ENCODE measurements at regions of chr13 and their contacts with region 1.

Region 1: GRCh38 chr13:106083620-106084350 is 451.7 kb downstream of the EFNB2 start:
- DNase-seq: no peak
- H3K4me3 ChIP-seq: no peak overlapping the region
- H3K27ac ChIP-seq: no peak overlapping the region
- H3K4me1 ChIP-seq: peaks cover 0 to 4% (median 0%) of the 10 kb centered on the region in 4 experiments; a peak in 2 of 7 replicates
- H3K27me3 ChIP-seq: no peaks in the 10 kb centered on the region
- CTCF ChIP-seq: peak; percentile 37 to 80 (median 78)
- EP300 ChIP-seq: no peak
- POLR2A ChIP-seq: no peak
- RAD21 ChIP-seq: peak; percentile 95 to 97

Region 2: DNA sequence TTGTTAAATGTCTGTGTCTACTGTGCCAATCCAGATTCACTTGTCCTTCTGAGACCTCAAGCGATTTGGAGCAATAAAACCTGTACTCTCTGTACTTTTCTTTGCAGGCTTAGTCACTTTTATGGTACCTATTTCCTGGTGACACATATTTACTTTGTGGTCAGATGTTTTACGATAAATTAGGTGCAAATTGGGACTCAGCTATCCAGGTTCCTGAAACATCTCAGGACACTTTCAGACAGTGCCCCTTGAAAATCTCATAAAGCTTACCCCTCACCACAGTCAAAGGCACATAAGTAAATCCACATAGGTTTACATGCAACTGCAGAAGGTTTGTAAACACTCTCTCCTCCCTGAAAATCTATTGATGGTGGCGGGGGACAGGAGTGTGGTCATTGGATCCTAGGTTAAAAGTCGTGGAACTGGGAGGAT is 12.9 kb after region 1 on chr13:
- CTCF ChIA-PET with region 1: interaction called, 10 read pairs
- POLR2A ChIA-PET with region 1: no interaction called
- DNase-seq: no peak
- H3K4me3 ChIP-seq: no peak overlapping the region
- H3K27ac ChIP-seq: no peak overlapping the region
- H3K4me1 ChIP-seq: peaks cover 11 to 26% (median 19%) of the 10 kb centered on the region in 4 experiments
- H3K27me3 ChIP-seq: no peaks in the 10 kb centered on the region
- CTCF ChIP-seq: no peak
- EP300 ChIP-seq: no peak
- POLR2A ChIP-seq: no peak
- RAD21 ChIP-seq: no peak

Region 3: GRCh38 chr13:106262886-106263285 is 179.1 kb after region 1 on chr13:
- CTCF ChIA-PET with region 1: no interaction called
- POLR2A ChIA-PET with region 1: no interaction called
- DNase-seq: no peak
- H3K4me3 ChIP-seq: no peak overlapping the region
- H3K27ac ChIP-seq: no peak overlapping the region
- H3K4me1 ChIP-seq: no peaks in the 10 kb centered on the region
- H3K27me3 ChIP-seq: no peaks in the 10 kb centered on the region
- CTCF ChIP-seq: no peak
- EP300 ChIP-seq: no peak
- POLR2A ChIP-seq: no peak
- RAD21 ChIP-seq: no peak